Heart left ventricle (tissue), 16 donors: ENCODE measurements at regions of chr17 and their contacts with region 1.

Region 1: GRCh38 chr17:11644261-11645212 is 46.3 kb downstream of the DNAH9 start:
- DNase-seq: peak in 4 of 5 donors; percentile 49 to 73 (median 67)
- ATAC-seq: peak in 3 of 4 donors; percentile 60 to 81 (median 64)
- H3K4me3 ChIP-seq: peak overlapping the region in 4 of 12 donors; percentile 0 to 15 (median 10)
- H3K27ac ChIP-seq: no peak overlapping the region
- H3K4me1 ChIP-seq: peaks cover 0 to 7% (median 0%) of the 10 kb centered on the region in 12 donors
- H3K27me3 ChIP-seq: peaks cover 0 to 9% (median 0%) of the 10 kb centered on the region in 9 donors
- CTCF ChIP-seq: peak; percentile 67 to 89 (median 82)
- POLR2A ChIP-seq: no peak

Region 2: DNA sequence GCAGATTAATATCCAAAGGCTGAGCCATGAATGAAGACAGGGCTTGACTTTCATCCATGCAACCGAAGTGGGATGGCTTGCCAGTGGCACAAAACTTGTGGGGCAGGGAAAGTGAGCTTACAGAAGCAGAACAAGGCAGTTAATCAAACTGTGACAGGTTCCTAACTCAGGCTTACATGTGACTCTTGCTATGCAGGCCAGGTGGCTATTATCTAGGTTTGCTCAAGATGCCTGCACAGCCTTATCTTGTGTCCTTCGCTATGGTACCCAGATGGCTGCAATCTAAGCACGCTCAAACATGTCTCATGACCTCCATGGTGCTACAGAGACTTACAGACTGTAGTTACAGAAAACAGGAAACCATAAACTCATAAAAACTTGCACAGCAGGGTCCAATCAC is 54.8 kb before region 1 on chr17:
- intact Hi-C with region 1: loop called in 1 of 10 experiments (anchors 10 kb)
- DNase-seq: no peak
- ATAC-seq: no peak
- H3K4me3 ChIP-seq: no peak overlapping the region
- H3K27ac ChIP-seq: no peak overlapping the region
- H3K4me1 ChIP-seq: no peaks in the 10 kb centered on the region
- H3K27me3 ChIP-seq: peaks cover 0 to 5% (median 0%) of the 10 kb centered on the region in 9 donors
- CTCF ChIP-seq: no peak
- POLR2A ChIP-seq: no peak

Region 3: GRCh38 chr17:11719856-11720255 is 75.3 kb after region 1 on chr17:
- intact Hi-C with region 1: no loop called
- DNase-seq: no peak
- ATAC-seq: no peak
- H3K4me3 ChIP-seq: no peak overlapping the region
- H3K27ac ChIP-seq: no peak overlapping the region
- H3K4me1 ChIP-seq: no peaks in the 10 kb centered on the region
- H3K27me3 ChIP-seq: no peaks in the 10 kb centered on the region
- CTCF ChIP-seq: no peak
- POLR2A ChIP-seq: no peak

Region 4: DNA sequence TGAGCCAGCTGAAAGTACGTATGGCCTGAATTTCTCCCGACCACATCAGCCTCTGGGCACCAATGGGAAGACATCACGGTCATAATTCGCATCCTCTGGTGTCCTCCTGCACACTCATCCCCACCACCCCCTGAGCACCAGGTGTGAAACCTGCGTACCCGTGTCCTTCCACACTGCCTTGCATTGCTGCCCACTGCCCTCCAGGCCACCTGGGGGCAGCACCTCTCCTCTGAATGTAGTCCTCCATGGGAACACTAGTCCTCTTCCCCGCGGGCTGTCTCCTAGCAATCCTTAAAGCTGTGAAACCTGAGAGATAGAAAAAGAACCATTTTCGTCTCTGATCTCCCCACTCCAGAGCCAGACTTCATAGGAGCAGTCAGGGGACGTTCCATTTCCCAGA is 227.2 kb after region 1 on chr17:
- intact Hi-C with region 1: no loop called
- DNase-seq: no peak
- ATAC-seq: no peak
- H3K4me3 ChIP-seq: no peak overlapping the region
- H3K27ac ChIP-seq: no peak overlapping the region
- H3K4me1 ChIP-seq: no peaks in the 10 kb centered on the region
- H3K27me3 ChIP-seq: peaks cover 0 to 5% (median 0%) of the 10 kb centered on the region in 9 donors
- CTCF ChIP-seq: peak in 1 of 12 donors; percentile 4
- POLR2A ChIP-seq: no peak

Region 5: DNA sequence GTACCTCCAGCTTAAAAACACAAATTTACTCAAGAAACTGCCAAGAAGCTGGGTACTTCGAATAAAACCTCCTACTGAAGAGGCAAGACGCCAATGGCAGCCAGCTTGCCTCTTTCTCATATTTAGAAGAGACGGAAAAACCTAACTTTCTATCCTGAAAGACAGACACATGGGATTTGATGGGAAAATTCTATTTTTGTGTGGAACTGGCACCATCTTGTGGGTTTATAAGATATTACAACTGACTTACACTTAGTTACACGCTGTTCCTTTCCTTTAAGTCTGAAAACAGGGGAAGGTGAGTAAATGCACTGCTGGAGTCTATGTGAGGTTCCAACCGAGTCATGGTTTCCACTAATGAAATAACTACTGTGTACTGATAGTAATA is 342.4 kb after region 1 on chr17:
- intact Hi-C with region 1: loop called in 1 of 10 experiments (anchors 10 kb)
- DNase-seq: no peak
- ATAC-seq: peak; percentile 34 to 76 (median 54)
- H3K4me3 ChIP-seq: no peak overlapping the region
- H3K27ac ChIP-seq: peak overlapping the region in 2 of 12 donors; percentile 48 to 59
- H3K4me1 ChIP-seq: peaks cover 0 to 11% (median 0%) of the 10 kb centered on the region in 12 donors
- H3K27me3 ChIP-seq: no peaks in the 10 kb centered on the region
- CTCF ChIP-seq: peak; percentile 25 to 66 (median 52)
- POLR2A ChIP-seq: no peak